AG04449 (cell line): ENCODE measurements at regions of chr11 and their contacts with region 1.

Region 1: GRCh38 chr11:72024069-72024754 is 25.5 kb downstream of the IL18BP start:
- DNase-seq: no peak
- H3K4me3 ChIP-seq: no peak overlapping the region
- CTCF ChIP-seq: no peak

Region 2: DNA sequence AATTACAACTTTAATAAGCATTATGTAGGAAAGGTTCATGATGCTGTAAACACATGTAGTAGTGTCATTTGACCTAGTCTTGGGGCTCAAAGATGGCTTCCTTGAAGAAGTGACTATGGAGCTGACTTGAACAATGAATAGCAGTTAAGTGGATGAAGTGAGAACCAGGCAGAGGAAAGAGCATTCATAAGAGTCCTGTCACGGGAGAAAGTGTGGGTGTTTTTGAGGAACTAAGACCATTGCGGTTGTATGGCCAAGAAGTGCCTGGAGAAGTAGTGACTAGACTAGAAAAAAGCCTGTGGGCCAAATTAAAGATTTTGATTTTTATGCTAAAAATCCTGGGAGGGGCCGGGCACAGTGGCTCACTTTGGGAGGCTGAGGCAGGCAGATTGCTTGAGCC is 32.7 kb before region 1 on chr11:
- CTCF ChIA-PET with region 1: interaction called, 10 read pairs
- POLR2A ChIA-PET with region 1: no interaction called
- DNase-seq: no peak
- H3K4me3 ChIP-seq: no peak overlapping the region
- CTCF ChIP-seq: no peak

Region 3: GRCh38 chr11:72069787-72070251 is 45.6 kb after region 1 on chr11:
- CTCF ChIA-PET with region 1: interaction called, 30 read pairs
- POLR2A ChIA-PET with region 1: no interaction called
- DNase-seq: no peak
- H3K4me3 ChIP-seq: peak overlapping the region; percentile 21
- CTCF ChIP-seq: no peak

Region 4: DNA sequence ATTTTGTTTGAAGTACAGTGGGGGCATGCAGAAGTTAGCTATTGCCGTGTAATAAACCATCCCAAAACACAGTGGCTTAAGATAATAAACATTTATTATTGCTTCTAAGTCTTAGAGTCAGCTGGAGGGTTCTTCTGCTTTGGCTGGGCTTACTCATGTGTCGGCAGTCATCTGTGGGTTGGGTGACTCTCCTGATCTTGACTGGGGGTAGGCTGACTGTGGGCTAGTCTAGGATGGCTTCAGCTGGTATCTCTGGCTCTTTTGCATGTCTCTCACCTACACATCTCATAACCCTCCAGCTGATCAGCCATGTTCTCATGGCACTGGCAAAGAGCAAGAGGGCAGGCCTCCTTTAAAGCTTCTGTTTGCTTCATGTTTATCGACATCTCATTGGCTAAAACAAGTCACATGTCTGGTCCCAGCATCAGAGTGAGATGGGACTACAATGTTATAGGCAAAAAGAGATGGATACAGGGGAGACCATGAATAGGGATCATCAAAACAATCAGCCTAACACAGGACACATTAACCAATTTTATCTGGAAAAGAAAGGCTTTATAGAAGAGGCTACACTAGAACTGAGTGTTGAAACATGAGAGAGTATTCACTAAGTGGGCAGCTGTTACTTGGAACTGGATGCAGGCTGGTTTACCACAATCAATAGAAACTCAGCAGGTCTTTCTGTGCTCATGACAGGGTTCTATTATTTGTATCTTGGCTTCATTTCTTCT is 61.6 kb after region 1 on chr11:
- CTCF ChIA-PET with region 1: interaction called, 540 read pairs
- POLR2A ChIA-PET with region 1: interaction called, 4 read pairs
- DNase-seq: no peak
- H3K4me3 ChIP-seq: no peak overlapping the region
- CTCF ChIP-seq: no peak

Region 5: DNA sequence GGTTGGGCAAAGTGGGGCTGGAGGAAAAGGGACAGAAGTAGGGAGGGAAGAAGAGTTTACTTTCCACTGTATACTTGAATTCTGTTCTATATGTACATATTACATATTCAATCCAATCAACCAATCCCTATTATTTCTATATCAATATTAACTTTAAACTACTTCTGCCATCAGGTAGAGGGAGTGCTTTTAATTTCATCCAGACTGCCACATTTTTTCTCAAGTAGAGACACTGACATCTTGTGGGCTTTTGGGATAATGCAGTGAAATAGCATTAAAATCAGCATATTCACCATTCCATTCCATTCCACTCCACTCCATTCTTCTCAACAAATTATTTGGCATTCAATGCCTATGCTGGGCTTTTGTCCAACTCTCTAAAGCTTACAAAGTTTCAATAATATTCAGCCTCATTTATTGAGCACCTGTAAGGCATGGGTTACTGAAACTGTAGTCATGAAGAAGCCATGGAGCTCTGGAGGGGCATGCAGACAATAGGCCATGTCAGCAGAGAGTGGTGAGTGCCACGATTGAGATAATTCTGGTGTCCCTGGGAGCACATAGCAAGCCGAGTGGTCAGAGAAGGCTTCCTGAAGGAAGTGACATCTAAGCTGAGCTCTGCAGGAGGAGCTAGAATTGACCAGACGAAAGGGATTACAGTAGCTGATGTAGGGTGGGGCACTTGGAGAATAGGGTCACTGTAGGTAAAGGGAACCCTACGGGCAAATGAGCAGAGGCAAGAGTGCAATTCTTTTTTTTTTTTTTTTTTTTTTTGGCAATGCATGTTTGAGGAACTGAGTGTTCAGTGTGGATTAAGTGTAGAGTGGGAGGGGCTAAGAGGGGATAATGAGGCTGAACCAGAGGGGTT is 422.9 kb after region 1 on chr11:
- CTCF ChIA-PET with region 1: interaction called, 10 read pairs
- POLR2A ChIA-PET with region 1: no interaction called
- DNase-seq: no peak
- H3K4me3 ChIP-seq: no peak overlapping the region
- CTCF ChIP-seq: peak; percentile 56